ENCODE measurements at regions of chr3 and their contacts with region 1.

Region 1: DNA sequence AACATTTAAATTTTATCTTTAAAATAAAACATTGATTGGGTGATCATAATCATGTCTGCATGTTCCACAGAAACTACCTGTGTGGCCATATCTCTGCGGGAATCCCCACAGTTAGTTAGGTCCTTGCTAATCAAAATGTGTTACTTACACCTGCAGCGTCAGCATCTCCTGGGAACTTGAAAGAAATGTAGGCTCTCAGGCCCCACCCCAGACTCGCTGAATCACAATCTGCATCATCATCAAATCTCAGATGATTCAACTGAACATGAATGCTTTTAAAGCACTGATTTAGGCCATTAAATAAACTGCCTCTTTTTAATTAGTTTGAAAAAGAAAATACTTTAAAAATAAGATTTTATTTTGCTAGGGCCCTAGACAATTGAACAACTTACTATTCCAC is 577.8 kb downstream of the PYDC2 start:
- DNase-seq: peak; percentile 13
- H3K27ac ChIP-seq: no peak overlapping the region
- CTCF ChIP-seq: no peak

Region 2: GRCh38 chr3:191813245-191813644 is 225.5 kb before region 1 on chr3:
- CTCF ChIA-PET with region 1: interaction called, 11 read pairs
- POLR2A ChIA-PET with region 1: no interaction called
- DNase-seq: no peak
- H3K27ac ChIP-seq: no peak overlapping the region
- CTCF ChIP-seq: no peak

Region 3: GRCh38 chr3:192063570-192063969 is 24.8 kb after region 1 on chr3:
- CTCF ChIA-PET with region 1: no interaction called
- POLR2A ChIA-PET with region 1: no interaction called
- DNase-seq: no peak
- H3K27ac ChIP-seq: no peak overlapping the region
- CTCF ChIP-seq: no peak